ENCODE measurements at regions of chr3 and their contacts with region 1.

Region 1: DNA sequence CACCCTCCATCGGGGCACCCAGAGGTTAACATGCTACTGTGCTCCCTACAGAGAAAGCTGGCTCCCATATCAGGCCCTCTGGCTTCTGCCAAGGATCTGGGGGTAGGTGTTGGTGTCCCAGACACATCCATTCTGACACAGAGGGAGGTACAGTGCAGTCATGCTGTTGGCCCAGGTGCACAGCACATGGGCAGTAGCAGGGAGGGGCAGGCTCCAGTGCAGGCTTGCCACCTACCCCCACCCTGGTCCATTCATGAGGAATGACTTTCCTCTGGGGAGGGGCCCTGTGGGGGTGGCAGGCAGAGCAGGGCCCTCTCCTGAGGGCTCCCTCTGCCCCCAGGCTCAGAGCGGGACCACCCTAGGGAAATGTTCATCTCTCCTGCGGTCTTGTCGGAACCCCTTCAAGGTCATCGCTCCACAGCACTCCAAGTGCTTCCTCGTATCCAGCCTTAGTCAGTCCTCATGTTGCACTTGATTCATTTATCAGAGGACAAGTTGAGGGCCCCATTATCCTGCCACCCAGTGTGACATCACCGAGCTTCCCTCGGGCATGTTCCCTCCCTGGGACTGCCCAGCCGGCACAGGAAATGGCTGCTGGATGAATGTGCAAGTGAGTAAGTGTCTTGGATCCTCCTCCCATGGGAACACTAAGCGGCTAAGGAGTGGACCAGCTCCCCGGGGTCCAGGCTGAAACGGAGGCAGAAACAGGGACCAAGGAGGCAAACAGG is 10.0 kb downstream of the DUSP7 start:
- H3K4me3 ChIP-seq: no peak overlapping the region
- H3K27ac ChIP-seq: no peak overlapping the region; the same call in 1 of the 2 replicates
- H3K4me1 ChIP-seq: no peaks in the 10 kb centered on the region
- CTCF ChIP-seq: no peak

Region 2: GRCh38 chr3:52056968-52057805 is 10.8 kb after region 1 on chr3:
- CTCF ChIA-PET with region 1: interaction called, 4 read pairs
- POLR2A ChIA-PET with region 1: interaction called, 11 read pairs
- H3K4me3 ChIP-seq: peak overlapping the region; percentile 58
- H3K27ac ChIP-seq: peak overlapping the region; percentile 18; the same call in 1 of the 2 replicates
- H3K4me1 ChIP-seq: peaks cover 4% of the 10 kb centered on the region; the same call in 1 of the 2 replicates
- CTCF ChIP-seq: no peak

Region 3: DNA sequence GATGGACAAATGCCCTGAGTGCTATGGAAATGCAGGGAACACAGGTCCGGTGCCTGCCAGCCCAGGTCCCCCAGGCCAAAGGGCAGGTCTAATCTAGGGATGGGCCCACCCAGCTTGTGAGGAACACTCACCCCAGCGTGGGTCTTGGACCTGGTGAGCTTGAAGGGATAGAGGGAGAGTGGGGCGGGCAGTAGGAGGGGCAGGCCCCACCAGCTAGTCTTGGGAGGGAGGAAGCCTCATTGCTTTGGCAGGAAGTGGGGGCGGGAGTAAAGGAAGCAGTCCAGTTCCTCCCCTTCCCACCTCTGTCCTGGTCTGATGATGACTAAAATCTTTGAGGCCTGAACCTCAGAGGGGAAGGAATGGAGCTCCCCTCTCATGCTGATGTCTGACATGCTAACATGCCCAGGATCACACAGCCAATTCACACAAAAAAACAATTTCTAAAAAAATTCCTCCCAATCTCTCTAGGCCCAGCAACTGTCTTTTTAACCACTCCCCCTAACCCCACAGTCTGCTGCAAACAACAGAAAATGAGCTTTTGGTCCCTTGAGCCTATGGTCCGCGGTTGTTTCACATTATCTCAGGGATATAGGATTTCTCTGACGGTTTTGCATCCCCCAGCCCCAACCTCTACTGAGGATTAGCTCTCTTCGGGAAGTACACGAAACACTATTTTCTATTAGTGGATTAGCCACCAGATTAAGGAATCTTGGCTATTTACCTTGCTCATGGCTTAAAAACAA is 40.7 kb after region 1 on chr3:
- CTCF ChIA-PET with region 1: no interaction called
- POLR2A ChIA-PET with region 1: no interaction called
- H3K4me3 ChIP-seq: no peak overlapping the region
- H3K27ac ChIP-seq: no peak overlapping the region
- H3K4me1 ChIP-seq: no peaks in the 10 kb centered on the region
- CTCF ChIP-seq: no peak

Region 4: GRCh38 chr3:52444860-52445793 is 398.8 kb after region 1 on chr3 and contains the start of gene SEMA3G:
- CTCF ChIA-PET with region 1: no interaction called
- POLR2A ChIA-PET with region 1: no interaction called
- H3K4me3 ChIP-seq: no peak within 1 kb of the TSS
- H3K27ac ChIP-seq: no peak within 1 kb of the TSS
- H3K4me1 ChIP-seq: no peaks in the 10 kb centered on the region
- CTCF ChIP-seq: peak; percentile 64